BJ (cell line): ENCODE measurements at regions of chr11 and their contacts with region 1.

Region 1: GRCh38 chr11:44133335-44133946 is 38.0 kb downstream of the EXT2 start:
- DNase-seq: no peak
- H3K4me3 ChIP-seq: no peak overlapping the region
- H3K27me3 ChIP-seq: no peaks in the 10 kb centered on the region
- CTCF ChIP-seq: peak; percentile 75

Region 2: GRCh38 chr11:44036811-44037657 is 96.4 kb before region 1 on chr11:
- CTCF ChIA-PET with region 1: no interaction called
- POLR2A ChIA-PET with region 1: no interaction called
- DNase-seq: no peak
- H3K4me3 ChIP-seq: no peak overlapping the region
- H3K27me3 ChIP-seq: peaks cover 1% of the 10 kb centered on the region
- CTCF ChIP-seq: peak; percentile 89

Region 3: GRCh38 chr11:44120169-44120568 is 13.3 kb before region 1 on chr11:
- CTCF ChIA-PET with region 1: interaction called, 13 read pairs
- POLR2A ChIA-PET with region 1: no interaction called
- DNase-seq: no peak
- H3K4me3 ChIP-seq: no peak overlapping the region
- H3K27me3 ChIP-seq: no peaks in the 10 kb centered on the region
- CTCF ChIP-seq: peak; percentile 22; the same call in 1 of the 2 replicates

Region 4: DNA sequence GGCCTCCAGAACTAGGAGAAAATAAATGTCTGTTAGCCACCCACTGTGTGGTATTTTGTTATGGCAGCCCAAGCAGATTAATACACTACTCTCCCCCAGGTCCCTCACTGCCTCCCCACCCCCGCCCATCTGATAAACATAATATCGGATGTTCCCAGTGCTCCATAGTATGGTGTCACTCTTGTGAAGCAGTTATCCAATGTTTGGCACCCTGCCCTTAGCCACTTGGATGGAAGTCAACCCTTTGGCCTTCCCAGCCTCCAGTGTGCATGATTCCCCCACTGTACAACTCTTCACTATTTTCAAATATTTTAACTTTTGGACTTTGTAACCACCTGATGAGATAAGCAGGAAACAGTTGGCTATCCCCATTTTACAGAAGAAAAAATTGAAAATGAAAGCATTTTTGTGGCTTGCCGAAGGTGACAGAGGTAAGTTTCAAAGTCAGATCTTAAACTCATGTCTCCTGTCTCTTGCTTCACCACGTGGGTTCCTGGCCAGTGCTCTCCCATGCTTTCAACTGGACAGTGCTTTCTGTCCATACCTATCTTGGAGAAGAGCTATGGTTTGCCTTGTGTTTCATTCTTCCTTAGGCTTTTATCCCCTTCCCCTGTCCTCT is 123.3 kb after region 1 on chr11:
- CTCF ChIA-PET with region 1: interaction called, 37 read pairs
- POLR2A ChIA-PET with region 1: no interaction called
- DNase-seq: no peak
- H3K4me3 ChIP-seq: no peak overlapping the region
- H3K27me3 ChIP-seq: no peaks in the 10 kb centered on the region
- CTCF ChIP-seq: no peak

Region 5: GRCh38 chr11:44538375-44539054 is 405.1 kb after region 1 on chr11:
- CTCF ChIA-PET with region 1: interaction called, 13 read pairs
- POLR2A ChIA-PET with region 1: no interaction called
- DNase-seq: no peak
- H3K4me3 ChIP-seq: no peak overlapping the region
- H3K27me3 ChIP-seq: peaks cover 2% of the 10 kb centered on the region
- CTCF ChIP-seq: peak; percentile 90